PC-9 (cell line): ENCODE measurements at regions of chr11 and their contacts with region 1.

Region 1: DNA sequence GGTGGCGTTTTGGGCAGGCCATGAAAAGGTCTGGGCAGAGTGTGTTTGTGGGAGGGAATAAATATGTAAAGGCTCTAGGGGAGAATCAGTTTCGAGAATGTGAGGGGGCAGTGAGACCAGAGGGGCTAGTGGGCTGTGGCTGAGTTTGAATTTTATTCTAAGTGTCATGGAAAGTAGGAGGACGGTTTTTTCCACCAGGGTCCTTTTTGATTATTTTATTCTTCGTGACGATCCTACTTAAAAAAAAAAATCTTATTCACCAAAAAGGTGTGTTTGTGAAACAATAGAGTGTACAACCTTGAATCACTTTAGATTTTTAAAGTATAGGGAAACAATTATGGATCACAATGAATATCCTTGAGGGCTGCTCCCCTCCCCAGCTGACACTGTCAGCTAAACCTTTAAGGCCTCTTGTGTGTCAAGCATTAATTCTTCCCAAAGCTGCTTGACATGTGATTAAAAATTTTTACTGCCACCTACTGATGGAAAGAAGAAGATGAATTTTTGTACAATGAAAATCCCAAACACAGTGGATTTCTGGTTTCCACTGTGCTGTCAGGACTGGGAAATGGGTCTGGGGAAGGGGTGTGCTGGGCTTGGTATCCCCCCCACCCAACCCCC is 107.5 kb upstream of the OR4B1 start:
- DNase-seq: peak in 1 of 2 experiments; percentile 70
- H3K4me3 ChIP-seq: peak overlapping the region; percentile 31; the same call in 1 of the 2 replicates
- H3K27ac ChIP-seq: peak overlapping the region; percentile 49
- H3K4me1 ChIP-seq: peaks cover 41% of the 10 kb centered on the region
- H3K27me3 ChIP-seq: no peaks in the 10 kb centered on the region
- CTCF ChIP-seq: no peak; the same call in 1 of the 2 replicates

Region 2: GRCh38 chr11:46856605-46857343 is 1252.4 kb before region 1 on chr11:
- CTCF ChIA-PET with region 1: no interaction called
- POLR2A ChIA-PET with region 1: no interaction called
- intact Hi-C with region 1: no loop called
- DNase-seq: no peak
- H3K4me3 ChIP-seq: no peak overlapping the region
- H3K27ac ChIP-seq: no peak overlapping the region
- H3K4me1 ChIP-seq: no peaks in the 10 kb centered on the region
- H3K27me3 ChIP-seq: no peaks in the 10 kb centered on the region
- CTCF ChIP-seq: no peak

Region 3: GRCh38 chr11:47766305-47767227 is 342.6 kb before region 1 on chr11:
- CTCF ChIA-PET with region 1: no interaction called
- POLR2A ChIA-PET with region 1: no interaction called
- intact Hi-C with region 1: loop called (anchors 5 kb)
- DNase-seq: peak in 1 of 2 experiments; percentile 56
- H3K4me3 ChIP-seq: peak overlapping the region; percentile 81
- H3K27ac ChIP-seq: peak overlapping the region; percentile 83
- H3K4me1 ChIP-seq: peaks cover 22% of the 10 kb centered on the region
- H3K27me3 ChIP-seq: no peaks in the 10 kb centered on the region
- CTCF ChIP-seq: no peak

Region 4: GRCh38 chr11:47847892-47848635 is 261.1 kb before region 1 on chr11 and contains the start of gene NUP160:
- CTCF ChIA-PET with region 1: interaction called, 5 read pairs
- POLR2A ChIA-PET with region 1: interaction called, 11 read pairs
- intact Hi-C with region 1: loop called (anchors 2 kb)
- DNase-seq: peak; percentile 60 to 84
- H3K4me3 ChIP-seq: peak within 1 kb of the TSS; percentile 96
- H3K27ac ChIP-seq: peak within 1 kb of the TSS; percentile 72
- H3K4me1 ChIP-seq: peaks cover 16% of the 10 kb centered on the region
- H3K27me3 ChIP-seq: no peaks in the 10 kb centered on the region
- CTCF ChIP-seq: no peak
- total RNA-seq, gene NUP160: 61.7 and 73.2 TPM in 2 replicates

Region 5: GRCh38 chr11:47932544-47932943 is 176.6 kb before region 1 on chr11:
- CTCF ChIA-PET with region 1: interaction called, 13 read pairs
- POLR2A ChIA-PET with region 1: no interaction called
- intact Hi-C with region 1: loop called (anchors 1 kb)
- DNase-seq: no peak
- H3K4me3 ChIP-seq: no peak overlapping the region
- H3K27ac ChIP-seq: no peak overlapping the region
- H3K4me1 ChIP-seq: peaks cover 22% of the 10 kb centered on the region
- H3K27me3 ChIP-seq: no peaks in the 10 kb centered on the region
- CTCF ChIP-seq: no peak

Region 6: GRCh38 chr11:47946682-47947575 is 162.2 kb before region 1 on chr11:
- CTCF ChIA-PET with region 1: interaction called, 3 read pairs
- POLR2A ChIA-PET with region 1: no interaction called
- intact Hi-C with region 1: loop called (anchors 1 kb)
- DNase-seq: peak; percentile 93 to 99
- H3K4me3 ChIP-seq: no peak overlapping the region
- H3K27ac ChIP-seq: peak overlapping the region; percentile 79
- H3K4me1 ChIP-seq: peaks cover 55% of the 10 kb centered on the region
- H3K27me3 ChIP-seq: no peaks in the 10 kb centered on the region
- CTCF ChIP-seq: no peak

Region 7: GRCh38 chr11:48055292-48056132 is 53.6 kb before region 1 on chr11:
- CTCF ChIA-PET with region 1: interaction called, 7 read pairs
- POLR2A ChIA-PET with region 1: interaction called, 4 read pairs
- intact Hi-C with region 1: loop called (anchors 1 kb)
- DNase-seq: peak; percentile 81 to 100
- H3K4me3 ChIP-seq: peak overlapping the region; percentile 46; the same call in 1 of the 2 replicates
- H3K27ac ChIP-seq: peak overlapping the region; percentile 96
- H3K4me1 ChIP-seq: peaks cover 91% of the 10 kb centered on the region
- H3K27me3 ChIP-seq: no peaks in the 10 kb centered on the region
- CTCF ChIP-seq: no peak

Region 8: GRCh38 chr11:48063424-48063978 is 45.7 kb before region 1 on chr11:
- CTCF ChIA-PET with region 1: interaction called, 16 read pairs
- POLR2A ChIA-PET with region 1: interaction called, 9 read pairs
- intact Hi-C with region 1: loop called (anchors 1 kb)
- DNase-seq: peak; percentile 62 to 98
- H3K4me3 ChIP-seq: peak overlapping the region; percentile 27; the same call in 1 of the 2 replicates
- H3K27ac ChIP-seq: peak overlapping the region; percentile 95
- H3K4me1 ChIP-seq: peaks cover 73% of the 10 kb centered on the region
- H3K27me3 ChIP-seq: no peaks in the 10 kb centered on the region
- CTCF ChIP-seq: no peak

Region 9: DNA sequence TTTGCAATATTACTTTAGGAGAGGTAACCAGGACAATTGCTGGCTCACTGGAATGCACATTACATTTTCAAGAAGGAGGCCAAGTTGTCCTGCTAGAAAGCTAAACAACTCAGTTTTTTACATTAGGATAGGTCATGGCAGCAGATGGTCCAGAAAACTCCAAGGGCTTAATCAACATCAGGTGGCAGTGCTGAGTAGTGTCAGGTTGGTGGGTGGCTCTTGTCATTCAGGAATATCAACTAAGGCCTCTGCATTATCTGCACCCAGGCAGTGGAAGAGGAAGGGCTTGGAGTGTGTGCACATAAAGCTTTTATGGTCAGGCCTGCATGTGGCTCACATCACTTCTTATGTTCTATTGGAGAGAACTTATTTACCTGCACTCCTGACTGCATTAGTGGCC is 75.3 kb after region 1 on chr11:
- CTCF ChIA-PET with region 1: no interaction called
- POLR2A ChIA-PET with region 1: no interaction called
- intact Hi-C with region 1: no loop called
- DNase-seq: no peak
- H3K4me3 ChIP-seq: no peak overlapping the region
- H3K27ac ChIP-seq: no peak overlapping the region
- H3K4me1 ChIP-seq: no peaks in the 10 kb centered on the region
- H3K27me3 ChIP-seq: no peaks in the 10 kb centered on the region
- CTCF ChIP-seq: no peak